RWPE1 (cell line): ENCODE measurements at regions of chr7 and their contacts with region 1.

Region 1: DNA sequence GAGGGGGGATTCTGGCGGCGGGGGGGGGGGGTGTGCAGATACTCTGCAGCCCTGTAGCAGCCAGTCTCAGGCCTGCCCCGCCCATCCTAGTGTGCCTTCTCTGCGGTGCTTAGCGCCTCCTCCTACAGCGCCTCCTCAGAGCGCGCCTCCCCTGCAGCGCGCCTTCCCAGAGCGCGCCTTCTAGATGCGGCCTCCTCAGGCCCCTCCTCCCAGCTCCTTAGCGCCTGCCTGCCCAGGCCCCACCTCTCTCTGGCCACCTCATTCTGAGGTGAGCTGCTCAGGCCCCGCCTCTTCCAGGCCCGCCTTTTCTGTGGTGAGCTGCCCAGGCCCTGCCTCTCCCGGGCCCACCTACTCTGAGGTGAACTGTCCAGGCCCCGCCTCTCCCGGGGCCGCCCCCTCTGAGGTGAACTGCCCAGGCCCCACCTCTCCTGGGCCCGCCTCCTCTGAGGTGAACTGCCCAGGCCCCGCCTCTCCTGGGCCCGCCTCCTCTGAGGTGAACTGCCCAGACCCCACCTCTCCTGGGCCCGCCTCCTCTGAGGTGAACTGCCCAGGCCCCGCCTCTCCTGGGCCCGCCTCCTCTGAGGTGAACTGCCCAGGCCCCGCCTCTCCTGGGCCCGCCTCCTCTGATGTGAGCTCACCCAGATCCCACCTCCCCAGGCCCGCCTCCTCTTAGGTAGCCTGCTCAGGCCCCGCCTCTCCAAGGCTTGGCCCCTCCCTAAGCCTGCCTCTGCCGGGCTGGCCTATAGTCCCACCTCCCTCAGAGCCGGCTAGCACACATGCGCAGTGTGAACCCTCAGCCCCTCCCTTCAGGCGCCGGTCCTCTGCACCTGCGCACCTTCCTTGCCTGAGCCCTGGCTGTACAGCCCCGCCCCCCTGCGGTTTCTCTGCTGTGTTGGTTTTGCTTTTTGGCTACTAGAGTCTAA is 2.1 kb upstream of the SGCE start:
- DNase-seq: peak; percentile 82
- H3K27ac ChIP-seq: peak overlapping the region; percentile 78
- CTCF ChIP-seq: no peak

Region 2: DNA sequence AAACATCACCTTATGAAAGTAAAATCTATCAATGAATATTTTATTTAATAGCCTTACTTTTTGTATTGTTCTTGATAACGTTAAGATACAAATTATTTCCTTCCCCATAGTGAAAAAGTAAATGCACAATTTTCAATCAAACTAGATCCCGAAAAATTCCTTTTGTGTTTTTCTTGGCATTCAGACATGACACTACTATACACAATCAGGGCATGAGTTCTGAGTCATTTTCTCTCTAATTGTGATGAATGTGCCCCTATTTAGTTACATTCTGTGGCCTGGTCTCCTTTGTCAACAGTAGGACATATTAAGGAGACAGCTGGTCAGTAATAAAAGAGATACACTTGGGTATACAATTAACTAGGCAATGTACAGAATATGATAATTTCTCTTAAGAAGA is 243.6 kb before region 1 on chr7:
- CTCF ChIA-PET with region 1: no interaction called
- POLR2A ChIA-PET with region 1: no interaction called
- DNase-seq: no peak
- H3K27ac ChIP-seq: no peak overlapping the region
- CTCF ChIP-seq: no peak

Region 3: GRCh38 chr7:94449148-94449725 is 208.8 kb before region 1 on chr7:
- CTCF ChIA-PET with region 1: interaction called, 23 read pairs
- POLR2A ChIA-PET with region 1: no interaction called
- DNase-seq: peak; percentile 48
- H3K27ac ChIP-seq: no peak overlapping the region
- CTCF ChIP-seq: peak; percentile 88

Region 4: GRCh38 chr7:94595717-94596116 is 62.3 kb before region 1 on chr7:
- CTCF ChIA-PET with region 1: interaction called, 4 read pairs
- POLR2A ChIA-PET with region 1: interaction called, 10 read pairs
- DNase-seq: no peak
- H3K27ac ChIP-seq: no peak overlapping the region
- CTCF ChIP-seq: no peak

Region 5: DNA sequence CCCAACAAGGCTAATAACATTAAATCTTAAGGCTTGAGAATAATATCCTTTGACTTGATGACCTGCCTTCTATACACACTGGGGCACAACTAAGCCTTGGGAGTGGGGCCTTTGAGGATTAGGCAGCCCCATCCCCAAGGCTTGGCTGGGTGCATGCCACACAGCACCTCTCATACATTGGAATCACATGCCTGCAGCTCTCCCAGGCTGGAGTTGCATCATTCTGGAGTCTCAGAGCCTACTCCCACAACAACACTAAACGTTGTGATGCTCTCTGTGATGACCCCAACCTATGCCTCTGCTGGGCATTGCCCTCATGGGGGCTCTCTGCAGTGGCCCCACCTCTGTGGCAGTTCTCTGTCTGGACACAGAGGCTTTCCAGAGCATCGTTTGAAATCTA is 29.8 kb after region 1 on chr7:
- CTCF ChIA-PET with region 1: no interaction called
- POLR2A ChIA-PET with region 1: no interaction called
- DNase-seq: no peak
- H3K27ac ChIP-seq: no peak overlapping the region
- CTCF ChIP-seq: no peak